Uterus (tissue), 4 donors: ENCODE measurements at regions of chr17 and their contacts with region 1.

Region 1: DNA sequence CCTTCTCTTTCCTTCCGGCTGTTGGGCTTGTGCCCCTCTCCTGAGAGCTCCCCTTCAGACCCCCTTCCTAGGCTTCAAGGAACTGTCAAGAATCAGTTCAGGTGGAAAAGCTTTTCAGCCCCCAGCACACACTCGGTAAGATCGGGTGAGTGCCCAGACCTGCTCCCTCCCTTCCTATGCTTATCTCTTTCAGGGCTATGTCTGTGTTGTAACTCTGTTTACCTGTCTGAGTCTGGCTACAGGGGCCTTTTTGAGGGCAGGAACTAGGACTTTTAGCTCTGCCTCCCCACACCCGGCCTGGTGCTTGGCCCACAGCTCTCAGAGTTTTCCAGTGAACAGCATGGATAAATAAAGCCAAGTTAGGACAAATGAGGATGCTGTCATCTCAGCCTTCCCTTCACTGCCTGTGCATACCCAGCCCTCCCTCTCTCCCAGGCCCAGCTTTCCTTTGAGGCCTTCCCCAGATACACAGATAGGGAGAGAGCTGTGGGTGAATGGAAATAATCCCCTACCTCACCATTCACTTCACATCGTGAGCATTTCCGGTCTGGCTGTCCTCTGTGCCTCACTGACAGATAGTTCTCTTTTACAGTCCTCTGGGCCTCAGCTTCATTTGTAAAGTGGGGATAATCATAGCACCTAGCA is 5.7 kb upstream of the MRPS23 start:
- DNase-seq: no peak
- H3K4me3 ChIP-seq: no peak overlapping the region
- H3K27ac ChIP-seq: no peak overlapping the region
- H3K4me1 ChIP-seq: peaks cover 0 to 7% of the 10 kb centered on the region in 2 donors
- H3K27me3 ChIP-seq: no peaks in the 10 kb centered on the region
- CTCF ChIP-seq: no peak
- POLR2A ChIP-seq: no peak

Region 2: DNA sequence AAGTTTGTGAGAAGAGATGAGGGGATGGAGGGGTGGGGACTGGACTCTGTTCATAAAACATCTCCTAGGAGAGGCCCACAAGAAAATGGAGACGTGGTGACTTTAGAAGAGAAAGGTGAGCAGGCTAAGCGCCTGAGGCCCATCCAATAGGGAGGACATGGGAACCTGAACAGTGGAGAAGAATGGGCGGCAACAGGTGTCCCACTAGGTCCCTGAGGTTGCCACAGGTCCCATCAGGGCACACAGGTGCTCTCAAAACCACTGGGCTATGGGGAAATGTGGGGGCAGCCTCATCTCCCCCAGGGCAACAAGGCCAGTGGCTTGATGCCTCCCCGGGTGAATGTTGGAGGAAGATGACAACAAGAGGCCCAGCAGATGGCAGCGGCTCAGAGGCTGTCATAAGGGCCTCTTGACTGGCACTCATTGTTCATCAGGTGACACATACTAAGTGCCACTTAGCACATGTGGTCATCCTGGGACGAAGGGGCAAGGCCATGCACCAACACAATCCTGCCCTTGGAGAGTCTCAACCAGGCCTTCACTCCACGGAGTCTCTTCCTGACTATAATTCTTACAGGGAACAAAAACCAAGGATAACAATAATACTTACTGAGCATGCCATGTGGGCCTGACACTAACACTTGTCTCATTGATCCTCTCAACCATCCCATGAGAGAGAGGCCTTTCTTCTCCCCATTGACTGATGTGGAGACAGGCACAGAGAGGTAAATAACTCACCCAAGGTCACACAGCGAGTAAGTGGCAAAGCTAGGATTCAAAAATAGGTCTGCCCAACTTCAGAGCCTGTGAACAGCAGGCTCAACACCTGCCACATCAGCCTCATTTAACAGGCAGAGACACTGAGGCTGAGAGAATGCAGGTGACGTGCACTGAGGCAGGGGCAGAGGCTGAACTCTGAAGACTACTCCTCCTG is 61.7 kb after region 1 on chr17:
- intact Hi-C with region 1: no loop called
- DNase-seq: no peak
- H3K4me3 ChIP-seq: no peak overlapping the region
- H3K27ac ChIP-seq: peak overlapping the region; percentile 91
- H3K4me1 ChIP-seq: peaks cover 12 to 13% of the 10 kb centered on the region in 2 donors
- H3K27me3 ChIP-seq: no peaks in the 10 kb centered on the region
- CTCF ChIP-seq: no peak
- POLR2A ChIP-seq: no peak

Region 3: GRCh38 chr17:57999496-58000017 is 144.0 kb after region 1 on chr17:
- intact Hi-C with region 1: loop called (anchors 2 kb)
- DNase-seq: no peak
- H3K4me3 ChIP-seq: no peak overlapping the region
- H3K27ac ChIP-seq: peak overlapping the region in 1 of 2 donors; percentile 8
- H3K4me1 ChIP-seq: peaks cover 9 to 10% of the 10 kb centered on the region in 2 donors
- H3K27me3 ChIP-seq: no peaks in the 10 kb centered on the region
- CTCF ChIP-seq: peak; percentile 74 to 81 (median 76)
- POLR2A ChIP-seq: no peak